ENCODE measurements at regions of chr3 and their contacts with region 1.

Region 1: DNA sequence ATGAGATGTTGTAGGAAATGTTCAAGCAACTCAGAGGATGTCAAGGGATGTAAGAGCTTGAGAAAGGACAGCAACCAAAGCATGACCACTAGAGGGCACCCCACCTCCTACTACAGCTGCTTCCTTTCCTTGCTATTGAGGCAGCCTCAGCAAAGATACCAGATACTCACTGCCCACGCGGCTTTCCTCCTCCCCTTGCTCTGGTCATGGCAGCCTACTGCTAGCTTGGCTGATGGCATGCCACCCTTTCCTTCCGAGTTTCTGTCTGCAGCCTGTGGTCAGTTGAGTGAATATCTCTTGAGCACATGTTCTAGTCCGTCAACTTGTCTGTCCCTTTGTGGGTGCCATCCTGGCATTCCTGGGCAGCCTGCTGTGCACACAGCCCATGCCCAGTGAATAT is 4.4 kb upstream of the CXCR6 start:
- DNase-seq: peak; percentile 89
- H3K4me3 ChIP-seq: no peak overlapping the region
- H3K27ac ChIP-seq: no peak overlapping the region
- H3K4me1 ChIP-seq: no peaks in the 10 kb centered on the region
- H3K27me3 ChIP-seq: no peaks in the 10 kb centered on the region
- CTCF ChIP-seq: peak; percentile 76 to 94 (median 90)
- POLR2A ChIP-seq: no peak

Region 2: DNA sequence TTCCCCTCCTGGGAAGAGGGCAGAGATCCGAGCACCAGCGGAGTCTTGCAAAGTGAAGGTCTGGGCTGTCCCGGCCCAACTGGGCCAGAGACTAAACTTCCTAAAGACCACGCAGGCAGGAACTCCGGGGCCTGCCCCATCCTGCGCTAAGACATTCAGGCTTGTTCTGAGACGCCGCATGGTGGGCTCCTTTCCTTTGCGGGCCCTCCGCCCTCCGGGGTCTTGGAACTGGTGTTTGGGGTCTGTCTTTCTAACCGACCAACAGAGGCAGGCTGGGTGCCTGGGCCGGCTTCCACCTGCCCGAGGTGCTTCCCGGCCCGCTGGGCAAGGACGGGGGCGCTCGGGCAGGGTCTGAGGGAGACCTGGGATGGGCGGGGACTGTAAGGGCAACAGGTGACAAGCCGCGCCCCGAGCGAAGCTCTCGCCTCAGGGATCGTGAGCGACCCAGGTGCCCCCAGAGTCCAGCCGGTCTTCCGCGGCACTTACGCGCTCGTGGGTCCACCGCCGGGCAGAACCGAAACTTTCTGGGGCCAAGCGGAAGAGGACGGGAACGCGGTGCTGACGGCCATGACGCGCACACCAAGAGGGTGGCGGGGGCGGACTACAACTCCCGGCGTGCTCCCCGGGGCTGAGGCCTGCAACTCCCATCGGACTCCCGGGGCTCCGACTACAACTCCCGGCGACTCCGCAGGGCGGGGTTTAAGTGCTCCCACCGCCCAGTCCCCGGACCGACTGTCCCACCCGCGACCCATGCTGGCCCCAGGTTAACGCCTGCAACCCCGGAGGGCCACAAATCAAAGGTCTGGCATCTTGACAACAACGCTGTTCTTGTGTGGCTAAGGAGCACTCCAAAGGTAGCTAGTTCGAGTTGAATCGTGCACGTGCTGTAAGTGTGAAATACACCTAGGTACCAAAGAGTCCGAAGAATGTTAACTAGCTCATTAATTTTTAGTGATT is 56.6 kb after region 1 on chr3 and contains the start of gene FYCO1:
- intact Hi-C with region 1: loop called (anchors 5 kb)
- DNase-seq: peak; percentile 93
- H3K4me3 ChIP-seq: peak within 1 kb of the TSS; percentile 67 to 85
- H3K27ac ChIP-seq: peak within 1 kb of the TSS; percentile 83 to 89
- H3K4me1 ChIP-seq: peaks cover 11% of the 10 kb centered on the region
- H3K27me3 ChIP-seq: no peaks in the 10 kb centered on the region
- CTCF ChIP-seq: peak in 1 of 4 experiments; percentile 14
- POLR2A ChIP-seq: peak; percentile 71
- total RNA-seq, gene FYCO1: 33.1 to 56.7 TPM

Region 3: DNA sequence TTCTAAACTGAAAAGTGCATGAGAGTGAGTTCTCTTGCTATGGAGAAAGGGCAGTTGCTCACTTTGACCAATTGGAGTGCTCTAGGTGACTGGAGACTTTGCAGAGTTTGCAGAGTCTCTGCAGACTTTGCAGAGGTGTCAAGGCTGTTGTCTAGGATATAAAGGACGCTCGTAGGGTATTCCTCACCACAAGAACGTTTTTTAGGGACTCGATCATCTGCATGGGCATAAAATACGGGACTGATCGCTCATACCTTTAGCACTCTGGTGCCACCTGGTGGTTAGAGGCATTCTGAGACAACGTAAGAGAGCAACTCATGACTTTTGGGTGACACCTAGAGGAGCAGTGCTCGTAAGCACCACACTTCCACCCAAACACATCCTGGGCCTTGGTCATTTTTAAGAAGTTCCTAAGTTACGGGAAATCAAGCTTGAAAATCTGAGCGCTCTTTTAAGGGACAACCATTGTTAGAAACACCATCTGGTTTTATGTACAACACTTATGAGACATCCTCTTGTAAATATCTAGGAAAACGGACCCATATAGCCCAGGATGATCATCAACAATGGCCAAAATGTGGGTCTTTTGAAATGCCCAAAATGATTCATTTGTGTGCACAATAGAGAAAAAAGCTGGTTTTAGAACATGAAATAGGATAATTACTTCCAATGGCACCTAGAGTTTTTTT is 140.0 kb after region 1 on chr3:
- intact Hi-C with region 1: loop called (anchors 1 kb)
- DNase-seq: peak; percentile 93
- H3K4me3 ChIP-seq: no peak overlapping the region
- H3K27ac ChIP-seq: no peak overlapping the region
- H3K4me1 ChIP-seq: no peaks in the 10 kb centered on the region
- H3K27me3 ChIP-seq: no peaks in the 10 kb centered on the region
- CTCF ChIP-seq: peak; percentile 87 to 99 (median 99)
- POLR2A ChIP-seq: no peak

Region 4: DNA sequence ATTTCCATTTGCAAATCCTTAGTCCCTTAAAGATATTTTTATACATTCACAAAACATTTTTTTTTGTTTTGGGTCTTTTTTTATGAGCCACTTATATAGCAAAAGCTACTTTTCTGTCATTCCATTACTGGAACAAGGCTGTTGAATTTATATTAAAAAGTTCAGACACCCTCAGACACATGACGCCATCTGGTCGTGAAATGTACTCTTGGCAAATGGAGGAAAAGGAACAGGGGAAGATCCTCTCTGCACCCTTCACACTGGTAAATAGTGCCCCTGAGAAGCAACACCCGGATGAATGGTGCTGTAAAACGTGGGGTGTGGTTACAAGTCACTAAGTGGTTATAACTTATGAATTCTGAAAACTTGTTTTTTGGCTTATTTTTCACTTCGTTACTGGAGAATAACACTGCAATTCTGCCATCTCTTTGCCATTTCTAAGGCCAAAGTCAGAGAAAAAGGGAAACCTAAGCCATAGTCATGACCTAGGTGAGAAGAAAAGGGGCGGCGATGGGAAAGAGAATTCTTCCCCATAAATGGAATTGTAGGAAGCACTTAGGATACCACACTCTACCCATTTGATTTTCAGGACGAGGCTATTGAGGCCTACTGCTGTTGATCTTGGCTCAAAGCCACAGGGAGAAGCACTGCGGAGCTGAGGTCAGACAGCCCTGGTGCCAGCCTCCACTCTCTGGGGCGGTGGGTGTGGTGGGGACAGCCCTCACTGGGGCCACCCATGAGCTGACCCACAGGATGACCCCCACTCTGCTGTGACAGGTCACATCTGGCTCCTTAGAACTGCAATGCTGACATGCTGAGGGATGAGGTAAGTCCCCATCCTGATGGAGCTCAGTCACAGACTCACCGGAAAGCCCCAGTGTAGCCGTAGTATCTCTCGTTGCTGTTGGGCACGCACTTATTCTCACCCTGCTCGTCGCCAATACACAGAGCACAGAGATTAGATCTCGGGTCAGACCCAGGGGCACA is 504.0 kb after region 1 on chr3:
- intact Hi-C with region 1: loop called (anchors 10 kb)
- DNase-seq: no peak
- H3K4me3 ChIP-seq: no peak overlapping the region
- H3K27ac ChIP-seq: no peak overlapping the region
- H3K4me1 ChIP-seq: no peaks in the 10 kb centered on the region
- H3K27me3 ChIP-seq: no peaks in the 10 kb centered on the region
- CTCF ChIP-seq: peak in 2 of 4 experiments; percentile 55 to 78
- POLR2A ChIP-seq: no peak

Measured in prostate gland (tissue), 2 donors.